ENCODE measurements at regions of chr1 and their contacts with region 1.

Region 1: DNA sequence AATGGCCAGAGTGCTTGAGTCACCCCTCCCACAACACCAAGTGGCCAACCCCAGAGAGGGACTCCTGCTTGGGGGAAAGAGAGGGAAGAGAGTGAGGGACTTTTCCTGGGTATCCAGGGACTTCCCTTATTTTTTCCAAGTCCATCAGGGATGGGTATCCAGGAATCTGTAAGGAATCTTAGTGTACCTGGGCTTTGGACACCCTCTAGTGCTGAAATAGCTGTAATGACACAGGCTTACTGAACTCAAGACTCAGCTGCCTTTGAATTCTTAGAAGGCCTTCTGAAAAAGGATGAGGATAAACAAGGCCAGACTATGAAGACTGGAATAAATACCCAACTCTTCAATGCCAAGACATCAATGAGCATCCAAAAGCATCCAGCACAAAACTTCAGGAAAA is 12.0 kb downstream of the TSHB start:
- DNase-seq: no peak
- H3K4me3 ChIP-seq: no peak overlapping the region
- H3K27ac ChIP-seq: no peak overlapping the region
- H3K4me1 ChIP-seq: no peaks in the 10 kb centered on the region
- H3K27me3 ChIP-seq: no peaks in the 10 kb centered on the region
- CTCF ChIP-seq: peak in 2 of 3 experiments; percentile 58 to 70; a peak in 3 of 4 replicates
- EP300 ChIP-seq: no peak
- POLR2A ChIP-seq: no peak
- RAD21 ChIP-seq: peak; percentile 80 to 86

Region 2: GRCh38 chr1:114979278-114979891 is 62.3 kb before region 1 on chr1:
- CTCF ChIA-PET with region 1: interaction called, 34 read pairs
- POLR2A ChIA-PET with region 1: no interaction called
- DNase-seq: peak in 1 of 2 experiments; percentile 81
- H3K4me3 ChIP-seq: no peak overlapping the region
- H3K27ac ChIP-seq: no peak overlapping the region
- H3K4me1 ChIP-seq: no peaks in the 10 kb centered on the region
- H3K27me3 ChIP-seq: no peaks in the 10 kb centered on the region
- CTCF ChIP-seq: peak in 2 of 3 experiments; percentile 65 to 71; a peak in 3 of 4 replicates
- EP300 ChIP-seq: no peak
- POLR2A ChIP-seq: no peak
- RAD21 ChIP-seq: peak; percentile 78

Region 3: GRCh38 chr1:115021154-115021553 is 20.5 kb before region 1 on chr1:
- CTCF ChIA-PET with region 1: no interaction called
- POLR2A ChIA-PET with region 1: no interaction called
- DNase-seq: no peak
- H3K4me3 ChIP-seq: no peak overlapping the region
- H3K27ac ChIP-seq: no peak overlapping the region
- H3K4me1 ChIP-seq: no peaks in the 10 kb centered on the region
- H3K27me3 ChIP-seq: no peaks in the 10 kb centered on the region
- CTCF ChIP-seq: no peak
- EP300 ChIP-seq: no peak
- POLR2A ChIP-seq: no peak
- RAD21 ChIP-seq: no peak

Region 4: DNA sequence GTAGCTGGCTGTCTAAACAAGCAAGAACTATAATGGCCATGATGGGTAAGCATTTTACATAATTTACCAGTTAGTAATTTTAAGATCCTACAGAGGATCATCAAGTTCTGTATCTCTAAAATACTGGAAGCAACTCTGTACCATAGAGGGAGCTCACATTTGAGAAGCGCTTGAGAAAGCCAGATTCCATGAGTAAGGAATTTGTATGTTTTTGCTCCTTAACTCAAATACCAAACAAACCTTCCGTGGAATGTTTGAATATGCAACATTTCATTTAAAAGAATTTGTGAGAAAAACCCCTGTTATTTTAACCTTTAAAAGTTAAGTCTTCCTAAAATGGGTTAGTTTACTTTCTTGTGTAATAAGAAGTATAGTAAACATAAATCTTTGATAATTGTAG is 10.1 kb before region 1 on chr1:
- CTCF ChIA-PET with region 1: interaction called, 18 read pairs
- POLR2A ChIA-PET with region 1: no interaction called
- DNase-seq: no peak
- H3K4me3 ChIP-seq: no peak overlapping the region
- H3K27ac ChIP-seq: no peak overlapping the region
- H3K4me1 ChIP-seq: no peaks in the 10 kb centered on the region
- H3K27me3 ChIP-seq: no peaks in the 10 kb centered on the region
- CTCF ChIP-seq: no peak
- EP300 ChIP-seq: no peak
- POLR2A ChIP-seq: no peak
- RAD21 ChIP-seq: no peak

Measured in H1 (cell line).